ENCODE measurements at regions of chr13 and their contacts with region 1.

Region 1: DNA sequence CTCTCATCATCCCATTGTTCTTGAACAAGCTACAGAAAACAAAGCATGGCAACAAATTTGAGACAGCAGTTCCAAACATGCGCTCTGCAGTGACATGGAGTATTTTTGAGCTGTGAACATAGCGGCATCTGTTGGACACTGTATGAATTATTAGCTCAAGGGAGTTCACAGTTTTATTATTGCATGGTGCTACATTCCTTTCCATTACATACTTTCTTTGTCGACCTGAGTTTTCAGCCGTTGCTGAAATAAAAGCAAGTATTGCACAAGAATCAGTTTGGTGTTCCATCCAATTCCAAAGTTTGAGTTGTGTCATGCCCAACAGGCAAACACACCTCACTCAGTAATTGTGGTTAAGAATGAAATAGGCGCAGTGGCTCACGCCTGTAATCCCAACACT is 30.1 kb upstream of the METTL21C start:
- DNase-seq: no peak
- ATAC-seq: peak; percentile 53

Region 2: DNA sequence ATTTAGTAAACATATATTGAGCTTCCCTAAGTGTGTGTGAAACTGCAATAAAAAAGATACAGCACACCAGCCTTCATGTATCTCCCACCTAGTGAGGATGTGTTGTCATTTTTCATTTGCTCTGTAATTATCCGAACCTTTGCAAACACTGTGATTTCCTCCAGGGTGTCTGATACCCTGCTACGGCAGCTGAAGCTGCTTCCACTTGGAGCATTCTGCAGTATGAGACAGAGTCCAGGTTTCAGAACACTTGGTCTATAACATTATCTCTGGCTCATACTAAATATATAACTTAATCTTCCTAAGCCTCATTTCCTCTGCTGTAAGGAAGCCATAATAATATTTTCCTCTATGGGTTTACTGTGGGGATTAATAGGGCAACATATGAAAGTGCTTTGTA is 1679.4 kb after region 1 on chr13:
- intact Hi-C with region 1: loop called (anchors 5 kb)
- DNase-seq: no peak
- ATAC-seq: no peak

Measured in sciatic nerve (tissue), 2 donors.